HepG2 (cell line): ENCODE measurements at regions of chr10 and their contacts with region 1.

Region 1: DNA sequence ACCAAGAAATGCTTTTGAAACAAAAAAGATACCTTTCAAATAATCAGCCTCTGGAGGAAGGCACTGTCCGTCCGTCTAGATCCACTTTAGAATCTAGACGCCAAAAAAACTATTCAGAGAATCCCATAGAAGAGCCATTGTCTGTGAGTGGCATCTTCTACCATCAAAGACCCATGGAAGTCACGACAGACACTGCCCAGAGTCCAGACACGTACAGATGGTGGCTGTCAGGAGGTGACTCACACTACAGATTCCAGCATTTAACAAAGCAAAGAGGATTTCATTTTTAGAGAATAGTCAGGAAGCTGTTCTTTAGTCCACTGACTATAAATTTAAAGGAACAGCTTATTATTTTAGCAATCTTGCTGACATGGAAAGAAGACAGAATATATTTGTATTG is 11.7 kb downstream of the C1QL3 start:
- DNase-seq: peak; percentile 45
- ATAC-seq: peak; percentile 52; the same call in 1 of the 3 replicates
- H3K4me3 ChIP-seq: no peak overlapping the region
- H3K27ac ChIP-seq: no peak overlapping the region
- H3K4me1 ChIP-seq: no peaks in the 10 kb centered on the region
- H3K27me3 ChIP-seq: no peaks in the 10 kb centered on the region
- CTCF ChIP-seq: no peak
- EP300 ChIP-seq: no peak
- POLR2A ChIP-seq: no peak
- RAD21 ChIP-seq: no peak

Region 2: GRCh38 chr10:16425449-16425848 is 84.5 kb before region 1 on chr10:
- CTCF ChIA-PET with region 1: no interaction called
- POLR2A ChIA-PET with region 1: no interaction called
- in situ Hi-C with region 1: no loop called
- intact Hi-C with region 1: no loop called
- DNase-seq: no peak
- ATAC-seq: no peak
- H3K4me3 ChIP-seq: no peak overlapping the region
- H3K27ac ChIP-seq: no peak overlapping the region
- H3K4me1 ChIP-seq: no peaks in the 10 kb centered on the region
- H3K27me3 ChIP-seq: peaks cover 0 to 3% of the 10 kb centered on the region in 2 experiments; a peak in 1 of 5 replicates
- CTCF ChIP-seq: no peak
- EP300 ChIP-seq: no peak
- POLR2A ChIP-seq: no peak
- RAD21 ChIP-seq: no peak

Region 3: DNA sequence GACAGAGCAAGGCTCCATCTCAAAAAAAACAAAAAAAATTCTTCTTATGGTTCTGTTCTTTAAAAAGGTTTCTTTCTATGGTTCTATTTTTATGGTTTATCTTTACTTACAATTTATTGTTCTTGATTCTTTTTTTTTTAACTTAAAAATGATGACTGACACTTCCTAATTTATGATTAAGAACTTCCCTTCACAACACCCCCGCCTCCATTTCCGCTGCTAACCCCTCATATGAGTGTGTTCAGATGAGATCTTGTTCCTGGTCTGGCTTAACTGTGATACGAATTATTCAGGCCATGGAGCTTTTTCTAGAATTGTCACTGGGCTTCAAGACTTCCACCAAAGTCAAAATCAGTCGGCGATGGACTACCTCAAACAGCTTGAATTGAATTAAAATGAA is 39.2 kb before region 1 on chr10:
- CTCF ChIA-PET with region 1: no interaction called
- POLR2A ChIA-PET with region 1: no interaction called
- in situ Hi-C with region 1: no loop called
- intact Hi-C with region 1: loop called (anchors 1 kb)
- DNase-seq: no peak
- ATAC-seq: no peak
- H3K4me3 ChIP-seq: no peak overlapping the region
- H3K27ac ChIP-seq: no peak overlapping the region
- H3K4me1 ChIP-seq: no peaks in the 10 kb centered on the region
- H3K27me3 ChIP-seq: no peaks in the 10 kb centered on the region
- CTCF ChIP-seq: no peak
- EP300 ChIP-seq: no peak
- POLR2A ChIP-seq: no peak
- RAD21 ChIP-seq: no peak

Region 4: DNA sequence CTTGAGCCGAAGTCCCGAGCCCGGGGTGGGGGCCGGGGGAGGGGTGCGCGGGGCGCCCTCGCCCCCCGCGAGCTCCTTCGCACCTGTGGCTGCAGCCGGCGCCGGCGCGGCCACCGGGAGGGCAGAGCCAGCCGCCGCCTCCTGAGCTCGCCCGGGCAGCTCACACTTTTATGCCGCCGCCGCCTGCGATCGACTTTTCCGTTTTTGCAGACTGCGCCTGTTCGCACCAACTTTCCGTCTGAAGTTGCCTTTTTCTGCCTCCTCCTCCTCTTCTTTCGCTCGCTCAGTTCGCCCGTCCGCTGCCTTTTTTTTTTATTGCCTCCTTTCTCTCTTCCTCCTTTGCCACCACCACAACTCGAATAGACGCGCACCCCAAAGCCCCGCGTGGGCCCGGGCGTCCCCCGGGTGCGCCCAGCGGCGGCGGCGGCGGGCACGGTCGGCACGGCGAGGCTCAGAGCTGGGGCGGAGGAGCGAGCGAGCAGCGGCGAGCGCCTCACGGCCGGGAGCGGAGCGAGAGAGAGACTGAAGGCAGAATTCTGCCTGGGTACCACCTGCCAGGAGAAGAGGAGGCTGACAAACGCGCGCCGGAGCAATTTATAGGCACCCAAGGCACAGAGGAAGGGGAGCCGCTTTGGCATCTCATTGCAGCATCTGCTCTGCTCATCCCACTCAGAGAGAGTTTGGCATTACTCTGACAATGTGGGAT is 11.5 kb after region 1 on chr10 and contains the start of gene C1QL3:
- CTCF ChIA-PET with region 1: no interaction called
- POLR2A ChIA-PET with region 1: no interaction called
- in situ Hi-C with region 1: no loop called
- intact Hi-C with region 1: no loop called
- DNase-seq: no peak
- ATAC-seq: peak; percentile 75
- H3K4me3 ChIP-seq: peak within 1 kb of the TSS; percentile 19 to 48 (median 34); a peak in 4 of 6 replicates
- H3K27ac ChIP-seq: no peak within 1 kb of the TSS
- H3K4me1 ChIP-seq: no peaks in the 10 kb centered on the region
- H3K27me3 ChIP-seq: peaks cover 1 to 30% of the 10 kb centered on the region in 2 experiments; a peak in 2 of 5 replicates
- CTCF ChIP-seq: no peak
- EP300 ChIP-seq: no peak
- POLR2A ChIP-seq: no peak
- RAD21 ChIP-seq: no peak
- total RNA-seq, gene C1QL3: not detected in 2 replicates